PC-9 (cell line): ENCODE measurements at regions of chrX and their contacts with region 1.

Region 1: DNA sequence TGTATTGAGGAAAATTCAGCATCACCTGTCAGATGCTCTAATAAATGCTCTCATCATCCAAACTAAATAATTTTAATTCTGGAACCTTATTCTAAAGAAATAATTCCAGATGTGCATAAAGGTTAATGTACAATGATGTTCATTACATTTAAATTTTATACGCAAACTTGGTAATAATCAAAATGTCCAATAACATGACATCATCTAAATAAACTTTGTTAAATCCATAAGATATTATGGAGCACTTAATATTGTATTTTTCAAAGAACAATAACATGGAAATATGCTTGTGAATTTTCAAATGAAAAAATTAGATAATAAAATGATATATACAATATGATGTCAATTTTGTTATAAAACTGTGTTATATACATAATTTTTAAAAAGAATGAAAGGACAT is 92.1 kb upstream of the ZCCHC13 start:
- DNase-seq: no peak
- H3K4me3 ChIP-seq: no peak overlapping the region
- H3K27ac ChIP-seq: no peak overlapping the region
- H3K4me1 ChIP-seq: no peaks in the 10 kb centered on the region
- H3K27me3 ChIP-seq: no peaks in the 10 kb centered on the region
- CTCF ChIP-seq: no peak

Region 2: DNA sequence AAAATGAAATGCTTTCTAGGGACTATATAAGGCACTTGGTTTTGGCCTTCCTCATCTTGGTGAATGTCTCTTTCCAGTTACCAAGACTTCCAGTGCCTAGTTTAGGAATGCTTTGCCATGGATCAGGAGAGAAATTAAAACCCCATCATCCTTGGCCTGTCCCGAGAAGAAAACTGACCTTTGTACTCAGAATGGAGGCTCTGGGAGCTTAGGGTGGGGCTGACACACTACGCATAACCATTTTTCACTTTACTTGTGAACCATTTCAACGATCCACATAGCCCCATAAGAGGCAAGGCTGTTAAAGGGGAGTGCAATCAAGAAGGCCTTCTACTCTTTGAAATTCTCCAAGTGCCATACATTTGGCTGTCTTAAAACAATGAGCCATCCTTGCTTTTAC is 65.4 kb after region 1 on chrX:
- CTCF ChIA-PET with region 1: no interaction called
- POLR2A ChIA-PET with region 1: no interaction called
- intact Hi-C with region 1: loop called (anchors 2 kb)
- DNase-seq: no peak
- H3K4me3 ChIP-seq: no peak overlapping the region
- H3K27ac ChIP-seq: no peak overlapping the region
- H3K4me1 ChIP-seq: no peaks in the 10 kb centered on the region
- H3K27me3 ChIP-seq: no peaks in the 10 kb centered on the region
- CTCF ChIP-seq: no peak